KBM-7 (cell line): ENCODE measurements at regions of chr17 and their contacts with region 1.

Region 1: DNA sequence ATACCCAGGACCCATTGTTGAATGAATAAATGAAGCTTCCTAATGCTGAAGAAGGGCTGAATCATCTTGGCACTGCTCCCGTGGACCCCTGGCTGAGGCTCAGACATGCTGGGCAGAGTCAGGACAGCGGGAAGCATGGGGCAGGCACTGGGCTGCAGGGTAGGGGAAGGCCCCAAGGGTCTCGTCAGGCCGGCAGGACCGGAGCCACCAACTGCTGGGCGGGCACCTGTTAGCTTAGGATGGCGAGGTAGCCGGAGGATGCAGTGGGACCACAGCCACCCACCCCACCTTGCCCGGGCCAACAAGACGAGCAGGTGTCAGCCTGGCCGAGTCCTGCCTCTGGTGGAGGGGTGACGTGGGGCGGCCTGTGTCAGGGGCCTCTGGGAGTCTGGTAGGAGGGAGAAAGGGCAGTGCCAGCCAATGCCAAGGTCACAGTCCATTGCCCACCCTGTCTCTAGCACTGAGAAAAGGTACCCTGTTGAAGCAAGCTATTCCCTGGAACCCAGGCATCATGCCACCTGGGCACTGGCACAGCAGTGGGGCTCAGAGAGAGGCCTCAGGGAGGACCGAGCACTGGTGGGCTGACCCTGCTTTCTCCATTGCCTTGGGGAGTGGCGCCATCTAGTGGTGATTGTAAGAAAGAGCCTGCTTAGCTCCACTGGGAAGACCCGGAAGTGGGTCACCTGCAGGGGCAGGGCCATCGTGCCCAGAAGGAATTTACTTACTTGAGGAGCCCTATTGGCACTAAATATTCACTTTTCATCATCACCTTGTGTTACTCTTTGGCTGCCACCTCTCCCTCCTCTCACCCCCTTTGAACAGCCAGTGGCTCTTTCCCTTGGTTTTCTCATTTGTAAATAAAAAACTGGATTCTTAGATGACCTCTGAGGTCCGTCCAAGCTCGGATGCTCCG is 3.0 kb upstream of the DLX3 start:
- DNase-seq: peak; percentile 79

Region 2: DNA sequence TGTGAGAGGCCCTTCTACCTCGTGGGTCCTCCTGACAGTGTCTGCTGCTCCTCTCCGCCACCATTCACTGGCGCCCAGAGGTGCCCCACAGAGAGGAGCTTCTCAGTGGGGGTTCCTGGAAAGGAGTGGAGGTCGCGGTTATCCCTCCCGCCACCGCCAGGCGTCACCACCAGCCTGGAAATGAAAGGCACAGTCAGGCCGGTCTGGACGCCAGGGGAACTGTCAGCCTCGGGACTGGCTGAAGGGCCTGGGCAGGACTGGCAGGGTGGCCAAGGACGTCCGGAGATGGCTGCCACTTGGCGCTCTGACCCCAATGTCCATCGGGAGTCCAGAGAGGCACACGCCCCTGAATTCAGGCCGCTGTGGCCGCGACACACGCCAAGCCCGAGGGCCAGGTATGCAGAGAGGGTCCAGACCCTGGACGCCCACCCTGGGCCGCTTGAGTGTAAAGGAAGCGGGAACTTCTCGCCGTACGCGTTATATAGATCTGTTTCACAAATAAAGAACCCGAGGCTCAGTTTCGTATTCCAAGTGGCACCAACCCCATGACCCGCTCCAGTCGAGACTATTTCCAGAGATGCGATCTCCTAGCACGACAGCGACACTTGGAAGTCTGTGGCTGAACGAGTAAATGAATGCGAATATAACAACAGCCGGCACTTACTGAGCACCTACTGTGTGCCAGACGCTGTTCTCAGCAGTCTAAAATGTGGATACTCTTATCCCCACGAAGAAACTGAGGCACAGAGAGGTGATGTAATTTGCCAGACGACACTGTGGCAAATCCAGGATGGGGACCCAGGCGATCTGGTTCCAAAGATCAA is 430.0 kb before region 1 on chr17:
- in situ Hi-C with region 1: loop called (anchors 25 kb)
- DNase-seq: peak; percentile 88

Region 3: DNA sequence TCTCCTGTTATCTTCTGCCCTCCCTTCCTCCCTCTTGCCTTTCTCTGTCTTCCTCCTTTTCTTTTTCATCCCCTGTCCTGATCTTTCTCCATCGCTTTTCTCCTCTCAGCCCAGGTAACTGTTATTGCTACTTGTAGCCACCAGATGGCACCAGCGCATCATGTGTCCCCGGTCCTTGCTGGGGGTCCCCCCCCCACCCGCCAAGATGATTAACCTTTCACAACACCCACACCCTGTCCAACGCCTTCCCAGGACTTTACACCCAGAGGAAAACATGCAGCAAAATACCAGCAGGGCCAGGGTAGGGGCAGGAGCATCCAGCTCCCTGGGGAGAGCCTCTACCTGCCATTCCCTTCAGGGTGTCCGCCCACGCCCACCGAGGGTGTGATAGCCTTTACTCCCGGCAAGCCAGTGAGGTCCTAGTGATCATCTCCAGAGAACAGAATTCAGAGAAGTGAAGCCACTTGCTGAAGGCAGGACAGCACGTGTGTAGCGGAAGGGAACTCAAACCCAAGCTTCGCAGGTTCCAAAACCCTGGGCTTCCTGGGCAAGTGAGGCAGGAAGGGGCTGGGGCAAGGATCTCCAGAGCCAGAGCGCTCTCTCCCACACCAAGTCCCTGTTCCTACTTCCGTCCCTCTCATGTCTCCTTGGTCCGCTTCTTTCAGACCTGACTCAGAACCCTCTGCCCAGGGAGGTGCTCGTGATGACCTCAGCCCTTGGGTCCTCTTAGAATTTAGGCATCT is 136.7 kb before region 1 on chr17:
- in situ Hi-C with region 1: loop called (anchors 10 kb)
- DNase-seq: peak; percentile 68

Region 4: GRCh38 chr17:49935526-49936210 is 62.4 kb before region 1 on chr17:
- in situ Hi-C with region 1: no loop called
- DNase-seq: no peak

Region 5: DNA sequence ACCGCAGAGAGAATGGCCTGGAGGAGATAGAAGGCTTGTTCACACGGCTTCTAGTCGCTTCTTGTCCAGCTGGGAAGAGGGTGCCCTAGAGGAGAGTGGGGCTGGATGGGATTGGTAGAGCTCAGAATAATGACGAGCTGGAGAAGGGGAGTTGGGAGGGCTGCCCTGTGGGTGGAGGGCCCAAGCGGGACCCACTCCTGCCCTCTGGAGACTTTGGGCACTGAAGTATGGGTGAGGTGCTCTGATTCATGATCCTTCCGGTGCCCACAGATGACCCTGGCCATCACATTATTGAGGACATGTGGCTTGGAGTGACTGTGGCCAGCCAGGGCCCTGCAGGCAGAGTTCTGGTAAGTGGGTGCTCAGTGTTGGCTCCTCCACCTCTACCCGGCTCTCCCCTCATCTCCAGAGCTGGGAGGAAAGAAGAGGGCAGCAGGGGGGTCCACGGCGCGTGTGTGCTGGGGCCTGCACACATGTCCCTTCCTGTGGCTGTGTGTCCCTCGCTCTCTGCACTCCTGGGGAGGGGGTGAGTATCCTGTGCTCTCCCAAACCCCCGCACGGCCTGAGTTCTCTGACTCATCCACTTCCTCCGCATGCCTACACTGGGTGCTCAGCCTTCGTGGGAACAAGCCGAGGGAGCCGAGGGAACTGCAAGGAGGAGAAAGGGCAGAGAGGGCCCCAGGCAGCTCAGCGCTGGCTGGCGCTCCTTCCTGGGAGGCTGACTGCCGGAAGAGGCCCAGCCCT is 66.4 kb after region 1 on chr17:
- in situ Hi-C with region 1: no loop called
- DNase-seq: no peak